MCF 10A (cell line): ENCODE measurements at regions of chr6 and their contacts with region 1.

Region 1: DNA sequence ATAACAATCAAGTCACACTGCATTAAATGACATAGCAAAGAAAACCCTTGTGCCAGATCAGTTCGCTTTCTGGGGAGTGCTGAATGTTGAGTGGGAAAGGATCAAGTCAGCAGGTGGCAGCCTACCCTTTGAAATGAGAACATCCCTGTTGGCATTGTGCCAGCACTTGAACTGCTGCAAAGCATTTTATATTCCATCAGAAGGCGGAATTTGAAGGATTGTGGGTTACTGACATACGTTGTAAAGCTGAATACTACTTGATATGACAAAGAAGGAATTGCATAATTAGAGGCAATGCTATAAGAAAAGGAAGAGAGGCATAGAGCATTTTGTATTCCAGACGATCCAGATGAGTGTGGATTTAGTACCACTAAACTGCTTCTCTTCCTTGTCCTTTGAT is 26.5 kb downstream of the BCKDHB start:
- DNase-seq: peak; percentile 75
- H3K4me3 Mint-ChIP-seq: no peak overlapping the region
- H3K27ac Mint-ChIP-seq: no peak overlapping the region
- H3K4me1 Mint-ChIP-seq: peaks cover 18% of the 10 kb centered on the region
- H3K27me3 Mint-ChIP-seq: no peaks in the 10 kb centered on the region
- CTCF ChIP-seq: peak; percentile 70

Region 2: GRCh38 chr6:80733641-80734040 is 600.6 kb after region 1 on chr6:
- CTCF ChIA-PET with region 1: no interaction called
- POLR2A ChIA-PET with region 1: no interaction called
- intact Hi-C with region 1: loop called (anchors 10 kb)
- DNase-seq: no peak
- H3K4me3 Mint-ChIP-seq: no peak overlapping the region
- H3K27ac Mint-ChIP-seq: no peak overlapping the region
- H3K4me1 Mint-ChIP-seq: no peaks in the 10 kb centered on the region
- H3K27me3 Mint-ChIP-seq: no peaks in the 10 kb centered on the region
- CTCF ChIP-seq: no peak